Activated naive CD8-positive, alpha-beta T cell treated with anti-CD3 and anti-CD28 coated beads, Interleukin-2, amount 10 ng/mL, durations not matched to agents 7 days and 5 days (primary cell): ENCODE measurements at regions of chr19 and their contacts with region 1.

Region 1: DNA sequence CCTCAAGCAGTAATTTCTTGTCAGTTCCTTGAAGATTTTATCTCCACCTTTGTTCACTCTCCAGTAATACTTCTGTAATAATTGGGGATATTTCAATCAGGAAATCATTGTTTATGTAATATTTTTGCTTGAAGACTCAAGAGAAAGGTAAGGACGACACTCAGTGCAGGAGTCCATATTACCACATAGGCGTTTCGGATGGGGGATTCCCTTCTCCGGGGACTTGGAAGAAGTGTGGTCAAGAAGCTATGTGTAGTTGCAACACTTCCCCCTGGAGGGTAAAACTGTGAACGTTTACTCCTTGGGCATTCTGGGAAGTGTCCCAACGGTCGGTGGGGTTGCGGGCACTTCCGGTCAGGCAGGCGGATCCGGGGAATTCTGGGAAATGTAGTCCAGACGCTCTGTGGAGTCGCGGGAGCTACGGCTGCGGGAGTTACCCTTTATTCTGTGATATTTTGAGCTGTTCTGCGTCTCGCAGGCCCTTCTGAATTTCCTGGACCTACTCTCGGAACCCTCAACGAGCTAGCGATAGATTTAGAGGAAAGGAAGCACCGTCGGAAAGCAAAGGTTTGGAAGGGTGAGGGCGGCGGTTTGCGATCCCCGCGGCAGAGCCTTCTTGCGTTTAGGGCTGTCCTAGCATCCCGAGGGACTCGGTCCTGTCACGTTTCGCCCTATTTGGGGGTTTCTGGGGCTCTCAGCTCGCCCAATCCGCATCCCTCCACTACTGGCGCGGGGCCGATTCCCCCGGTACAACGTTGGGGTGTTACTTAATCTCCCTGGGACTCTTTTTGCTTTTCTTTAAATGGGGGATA is at the start of gene ZNF221:
- DNase-seq: peak; percentile 71
- ATAC-seq: peak; percentile 86
- H3K4me3 Mint-ChIP-seq: peak within 1 kb of the TSS; percentile 93
- H3K27ac Mint-ChIP-seq: peak within 1 kb of the TSS; percentile 78
- H3K4me1 Mint-ChIP-seq: peaks cover 2% of the 10 kb centered on the region
- H3K27me3 Mint-ChIP-seq: peaks cover 8% of the 10 kb centered on the region
- total RNA-seq, gene ZNF221: 2.9 to 3.7 TPM

Region 2: DNA sequence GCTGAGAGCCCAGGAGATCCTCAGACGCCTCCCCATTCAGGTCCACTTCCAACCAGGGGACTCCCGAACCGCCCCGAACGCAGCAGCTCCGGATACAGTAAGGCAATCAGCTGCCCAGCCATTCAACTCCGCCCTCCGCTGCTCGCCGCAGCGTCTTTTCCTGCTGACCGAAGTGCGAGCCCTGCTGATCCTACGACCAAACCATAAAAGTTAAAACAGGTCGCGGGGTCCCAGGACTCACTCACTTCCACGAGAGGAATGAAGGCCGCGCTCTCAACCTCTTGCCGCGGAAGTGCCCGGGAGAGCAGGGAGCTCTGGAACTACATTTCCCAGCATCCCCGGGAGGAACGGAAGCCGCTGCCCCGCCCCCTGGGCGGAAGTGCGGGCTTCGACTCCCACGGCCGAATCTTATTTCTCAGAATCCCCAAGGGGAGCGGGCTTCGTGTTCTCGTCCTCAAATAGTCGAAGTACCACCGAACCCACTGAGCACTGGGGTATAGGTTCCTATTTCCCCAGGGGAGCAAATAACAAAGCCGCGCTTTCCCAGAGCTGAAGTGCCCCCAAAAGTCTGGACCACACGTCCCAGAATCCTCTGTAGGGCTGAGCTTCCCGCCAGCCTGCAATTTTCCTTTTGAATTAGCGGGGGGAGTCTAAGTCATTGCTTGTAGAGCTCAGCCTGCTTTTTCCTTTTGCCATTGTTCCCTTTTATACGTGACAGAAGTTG is 15.9 kb before region 1 on chr19 and contains the start of gene ZNF45:
- POLR2A ChIA-PET with region 1: interaction called, 10 read pairs
- DNase-seq: peak; percentile 86
- ATAC-seq: peak; percentile 88
- H3K4me3 Mint-ChIP-seq: peak within 1 kb of the TSS; percentile 93
- H3K27ac Mint-ChIP-seq: peak within 1 kb of the TSS; percentile 87
- H3K4me1 Mint-ChIP-seq: peaks cover 13% of the 10 kb centered on the region
- H3K27me3 Mint-ChIP-seq: no peaks in the 10 kb centered on the region
- total RNA-seq, gene ZNF45: 21.0 to 22.4 TPM

Region 3: DNA sequence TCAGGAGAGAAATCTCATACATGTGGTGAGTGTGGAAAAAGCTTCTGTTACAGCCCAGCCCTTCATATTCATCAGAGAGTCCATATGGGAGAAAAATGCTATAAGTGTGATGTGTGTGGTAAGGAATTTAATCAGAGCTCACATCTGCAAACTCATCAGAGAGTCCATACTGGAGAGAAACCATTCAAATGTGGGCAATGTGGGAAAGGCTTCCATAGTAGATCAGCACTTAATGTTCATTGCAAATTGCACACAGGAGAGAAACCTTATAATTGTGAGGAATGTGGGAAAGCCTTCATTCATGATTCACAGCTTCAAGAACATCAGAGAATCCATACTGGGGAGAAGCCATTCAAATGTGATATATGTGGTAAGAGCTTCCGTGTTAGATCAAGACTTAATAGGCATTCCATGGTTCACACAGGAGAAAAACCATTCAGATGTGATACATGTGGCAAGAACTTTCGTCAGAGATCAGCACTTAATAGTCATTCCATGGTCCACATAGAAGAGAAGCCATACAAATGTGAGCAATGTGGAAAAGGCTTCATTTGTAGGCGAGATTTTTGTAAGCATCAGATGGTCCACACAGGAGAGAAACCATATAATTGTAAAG is 15.1 kb after region 1 on chr19:
- POLR2A ChIA-PET with region 1: no interaction called
- DNase-seq: no peak
- ATAC-seq: no peak
- H3K4me3 Mint-ChIP-seq: no peak overlapping the region
- H3K27ac Mint-ChIP-seq: no peak overlapping the region
- H3K4me1 Mint-ChIP-seq: no peaks in the 10 kb centered on the region
- H3K27me3 Mint-ChIP-seq: no peaks in the 10 kb centered on the region

Region 4: DNA sequence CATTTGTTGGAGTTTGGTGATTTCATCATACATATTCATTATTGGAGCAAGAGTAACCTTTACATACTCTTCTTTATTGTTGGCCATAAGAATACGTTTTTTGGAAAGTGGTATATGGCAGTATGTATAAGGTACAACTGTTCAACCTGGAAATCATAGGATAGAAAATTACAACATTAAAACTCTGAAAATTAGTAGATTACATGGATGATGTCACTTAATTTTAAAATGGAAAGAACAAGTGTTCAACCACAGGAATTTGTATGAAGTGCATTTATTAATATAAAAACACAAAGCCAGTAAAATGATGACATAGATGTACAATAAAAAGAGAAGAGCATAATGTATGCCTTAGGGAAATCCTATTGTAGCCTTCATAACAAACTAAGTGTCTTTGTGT is 25.7 kb after region 1 on chr19:
- POLR2A ChIA-PET with region 1: no interaction called
- DNase-seq: no peak
- ATAC-seq: no peak
- H3K4me3 Mint-ChIP-seq: no peak overlapping the region
- H3K27ac Mint-ChIP-seq: no peak overlapping the region
- H3K4me1 Mint-ChIP-seq: no peaks in the 10 kb centered on the region
- H3K27me3 Mint-ChIP-seq: no peaks in the 10 kb centered on the region

Region 5: DNA sequence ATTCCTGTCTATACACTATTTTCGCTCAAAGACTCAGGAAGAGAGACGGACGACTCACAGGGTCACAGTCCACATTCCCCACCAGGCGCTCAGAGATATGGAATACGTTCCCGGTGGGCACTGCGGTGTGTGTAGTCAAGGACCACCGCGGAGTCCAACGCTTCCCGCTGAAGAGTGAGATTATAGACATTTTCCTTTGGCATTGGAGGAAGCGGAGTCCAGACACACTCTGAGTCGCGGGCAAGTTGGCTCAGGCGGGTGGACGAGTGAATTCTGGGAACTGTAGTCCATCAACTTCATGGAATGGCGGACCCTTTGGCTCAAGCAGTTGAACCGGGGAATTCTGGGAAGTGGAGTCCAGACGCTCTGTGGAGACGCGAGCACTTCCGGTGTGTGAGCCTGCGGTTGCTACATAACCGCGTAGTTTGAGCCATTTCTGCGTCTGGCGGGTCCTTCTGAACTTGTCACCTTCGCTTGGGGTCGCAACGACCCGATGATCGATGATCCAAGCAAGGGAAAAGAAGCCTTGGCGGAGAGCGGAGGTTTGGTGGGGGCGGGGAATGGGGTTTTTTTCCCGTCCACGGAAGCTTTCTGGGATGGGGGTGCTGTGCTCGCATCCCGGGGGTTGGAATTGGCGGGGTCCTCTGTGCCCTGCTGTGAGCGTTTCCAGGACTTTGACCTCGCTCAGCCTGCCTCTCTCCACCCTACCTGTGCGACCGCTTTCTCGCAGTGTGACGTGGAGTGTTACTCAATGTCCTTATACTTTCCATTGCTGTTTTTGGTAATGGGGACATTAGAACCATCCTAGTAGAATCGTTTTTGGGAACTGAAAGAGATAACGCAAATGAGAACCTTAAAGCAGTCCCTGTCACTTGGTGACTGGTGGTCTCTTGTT is 51.8 kb after region 1 on chr19 and contains the start of gene ZNF230:
- POLR2A ChIA-PET with region 1: no interaction called
- DNase-seq: peak; percentile 77
- ATAC-seq: peak; percentile 94
- H3K4me3 Mint-ChIP-seq: peak within 1 kb of the TSS; percentile 99
- H3K27ac Mint-ChIP-seq: peak within 1 kb of the TSS; percentile 98
- H3K4me1 Mint-ChIP-seq: peaks cover 10% of the 10 kb centered on the region
- H3K27me3 Mint-ChIP-seq: no peaks in the 10 kb centered on the region
- total RNA-seq, gene ZNF230: 9.2 to 9.7 TPM